ENCODE measurements at regions of chr11 and their contacts with region 1.

Region 1: DNA sequence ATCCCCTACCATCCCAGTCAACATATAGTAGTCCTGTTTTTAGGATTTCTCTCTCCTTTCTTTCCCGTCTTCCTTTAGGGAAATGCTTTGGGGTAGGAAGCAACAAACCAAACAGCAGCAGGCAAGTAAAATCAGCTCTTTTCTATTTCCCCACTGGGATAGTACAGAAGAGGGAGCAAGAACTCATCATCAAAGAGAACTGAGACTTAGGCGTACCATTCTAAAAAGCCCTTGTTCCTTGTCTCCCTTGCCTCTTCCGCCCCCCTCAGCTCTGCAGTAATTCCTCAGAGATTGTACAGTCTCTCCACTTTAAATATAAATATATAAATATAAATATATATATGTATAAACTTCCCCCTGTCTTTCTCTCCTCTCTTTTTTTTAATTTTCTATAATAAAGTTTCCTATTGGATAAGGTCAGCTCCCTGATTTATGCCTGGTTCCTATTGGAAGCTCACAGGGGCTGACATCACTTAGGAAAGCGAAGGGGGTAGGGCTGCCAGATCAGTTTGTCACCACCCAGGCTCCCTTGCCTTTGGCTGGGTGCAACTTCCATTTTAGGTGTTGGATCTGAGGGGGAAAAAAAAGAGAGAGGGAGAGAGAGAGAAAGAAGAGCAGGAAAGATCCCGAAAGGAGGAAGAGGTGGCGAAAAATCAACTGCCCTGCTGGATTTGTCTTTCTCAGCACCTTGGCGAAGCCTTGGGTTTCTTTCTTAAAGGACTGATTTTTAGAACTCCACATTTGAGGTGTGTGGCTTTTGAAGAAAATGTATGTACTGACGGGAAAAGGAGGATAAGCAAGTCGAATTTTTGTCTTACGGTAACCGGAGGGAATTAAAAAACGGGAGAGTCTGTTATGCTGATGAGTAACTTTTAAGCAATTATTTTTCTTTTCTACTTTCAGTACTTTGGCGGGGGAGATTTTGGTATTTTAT is at the start of gene CTNND1:
- DNase-seq: peak; percentile 97
- H3K4me3 ChIP-seq: peak within 1 kb of the TSS; percentile 51 to 98 (median 93)
- H3K27ac ChIP-seq: peak within 1 kb of the TSS; percentile 98
- H3K4me1 ChIP-seq: peaks cover 23% of the 10 kb centered on the region
- H3K27me3 ChIP-seq: no peaks in the 10 kb centered on the region
- CTCF ChIP-seq: peak in 1 of 2 donors; percentile 10
- total RNA-seq, gene CTNND1: 164 to 212 TPM

Region 2: DNA sequence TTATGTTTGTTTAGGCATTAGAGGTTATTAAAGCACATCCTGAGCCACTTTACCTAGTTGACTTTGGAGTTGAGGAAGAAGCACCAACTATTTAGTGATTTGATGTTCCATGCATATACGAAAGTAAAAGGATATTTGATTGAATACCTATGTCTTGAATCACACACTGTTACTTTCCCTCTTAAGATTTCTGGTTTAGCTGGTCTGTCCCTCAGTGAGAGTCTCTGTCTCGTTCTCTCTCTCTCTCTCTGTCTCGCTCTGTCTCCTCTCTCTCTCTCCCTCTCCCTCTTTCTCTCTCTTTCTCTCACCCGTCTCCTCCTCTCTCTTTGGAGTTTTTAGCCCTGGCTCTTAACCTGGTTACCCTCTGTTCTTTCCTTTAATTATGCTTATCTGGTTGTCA is 11.0 kb after region 1 on chr11:
- CTCF ChIA-PET with region 1: no interaction called
- dilution Hi-C with region 1: no loop called
- in situ Hi-C with region 1: no loop called
- intact Hi-C with region 1: loop called (anchors 1 kb)
- DNase-seq: peak; percentile 52
- H3K4me3 ChIP-seq: no peak overlapping the region
- H3K27ac ChIP-seq: no peak overlapping the region
- H3K4me1 ChIP-seq: peaks cover 35% of the 10 kb centered on the region
- H3K27me3 ChIP-seq: no peaks in the 10 kb centered on the region
- CTCF ChIP-seq: no peak

Region 3: GRCh38 chr11:57778318-57779037 is 16.9 kb after region 1 on chr11:
- CTCF ChIA-PET with region 1: interaction called, 4 read pairs
- dilution Hi-C with region 1: no loop called
- in situ Hi-C with region 1: no loop called
- intact Hi-C with region 1: loop called (anchors 1 kb)
- DNase-seq: peak; percentile 86
- H3K4me3 ChIP-seq: peak overlapping the region in 2 of 3 experiments; percentile 9 to 13
- H3K27ac ChIP-seq: peak overlapping the region; percentile 89
- H3K4me1 ChIP-seq: peaks cover 78% of the 10 kb centered on the region
- H3K27me3 ChIP-seq: no peaks in the 10 kb centered on the region
- CTCF ChIP-seq: no peak

Region 4: DNA sequence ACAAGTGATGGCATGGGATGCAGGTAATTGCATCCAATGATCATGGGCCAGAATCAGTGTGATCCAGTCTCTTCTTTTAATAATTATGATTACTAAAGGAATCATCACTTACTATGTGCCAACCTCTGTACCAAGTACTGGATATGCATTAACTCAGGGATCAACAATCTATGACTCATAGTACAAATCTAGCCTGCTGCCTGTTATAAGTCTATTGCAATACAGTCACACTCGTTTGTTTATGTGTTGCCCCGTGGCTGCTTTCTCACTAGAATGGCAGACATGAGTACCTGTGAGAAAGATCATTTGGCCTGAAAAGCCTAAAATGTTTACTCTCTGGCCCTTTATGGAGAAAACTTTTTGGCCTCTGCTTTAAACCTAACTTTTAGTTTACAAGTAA is 314.2 kb after region 1 on chr11:
- CTCF ChIA-PET with region 1: no interaction called
- dilution Hi-C with region 1: no loop called
- in situ Hi-C with region 1: no loop called
- intact Hi-C with region 1: loop called (anchors 5 kb)
- DNase-seq: peak; percentile 80
- H3K4me3 ChIP-seq: no peak overlapping the region
- H3K27ac ChIP-seq: no peak overlapping the region
- H3K4me1 ChIP-seq: no peaks in the 10 kb centered on the region
- H3K27me3 ChIP-seq: no peaks in the 10 kb centered on the region
- CTCF ChIP-seq: no peak

Region 5: GRCh38 chr11:58243954-58244353 is 482.4 kb after region 1 on chr11:
- CTCF ChIA-PET with region 1: no interaction called
- dilution Hi-C with region 1: no loop called
- in situ Hi-C with region 1: no loop called
- intact Hi-C with region 1: no loop called
- DNase-seq: no peak
- H3K4me3 ChIP-seq: no peak overlapping the region
- H3K27ac ChIP-seq: no peak overlapping the region
- H3K4me1 ChIP-seq: no peaks in the 10 kb centered on the region
- H3K27me3 ChIP-seq: peaks cover 2% of the 10 kb centered on the region
- CTCF ChIP-seq: no peak

Measured in mammary epithelial cell (primary cell).